ENCODE measurements at regions of chr9 and their contacts with region 1.

Region 1: DNA sequence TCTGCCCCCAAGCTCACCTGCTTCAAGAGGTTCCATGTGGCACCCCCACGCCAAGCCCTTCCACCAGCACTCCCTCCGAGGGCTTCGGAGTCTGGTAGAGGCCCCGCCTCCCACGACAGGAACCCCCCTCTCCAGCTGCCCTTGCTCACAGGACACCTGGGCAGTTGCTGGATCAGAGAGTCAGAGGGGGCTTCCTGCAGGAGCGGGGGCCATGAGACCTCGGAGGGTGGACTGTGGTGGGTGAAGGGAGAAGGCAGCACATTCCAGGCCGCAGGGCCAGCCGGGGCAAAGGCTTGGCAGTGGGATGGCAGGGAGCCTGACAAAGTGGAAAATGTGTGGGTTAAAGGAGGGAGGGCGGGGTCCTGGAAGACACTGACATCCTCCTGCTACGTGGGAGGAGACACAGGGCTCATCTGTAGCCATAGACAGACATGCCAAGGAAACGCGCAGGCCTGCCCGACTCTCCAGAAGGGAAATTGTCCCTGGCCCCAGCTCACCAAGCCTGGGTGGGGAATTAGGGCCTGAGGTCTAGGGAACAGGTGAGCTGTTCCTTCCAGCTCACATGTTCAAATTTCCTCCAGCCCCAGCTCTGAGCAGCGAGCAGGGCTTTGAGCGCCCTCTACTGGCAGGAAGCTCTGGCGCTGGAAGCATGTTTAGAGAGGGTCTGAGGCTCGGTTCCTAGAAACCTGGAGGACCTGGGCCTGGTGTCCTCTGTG is 74.2 kb downstream of the NTNG2 start:
- DNase-seq: peak; percentile 63 to 87 (median 77)
- ATAC-seq: peak; percentile 7 to 46 (median 24)
- H3K4me3 ChIP-seq: no peak overlapping the region
- H3K27ac ChIP-seq: no peak overlapping the region
- H3K4me1 ChIP-seq: peaks cover 0 to 30% (median 6%) of the 10 kb centered on the region in 12 donors
- H3K27me3 ChIP-seq: peaks cover 0 to 15% (median 0%) of the 10 kb centered on the region in 9 donors
- CTCF ChIP-seq: peak; percentile 88 to 98 (median 94)
- POLR2A ChIP-seq: no peak

Region 2: DNA sequence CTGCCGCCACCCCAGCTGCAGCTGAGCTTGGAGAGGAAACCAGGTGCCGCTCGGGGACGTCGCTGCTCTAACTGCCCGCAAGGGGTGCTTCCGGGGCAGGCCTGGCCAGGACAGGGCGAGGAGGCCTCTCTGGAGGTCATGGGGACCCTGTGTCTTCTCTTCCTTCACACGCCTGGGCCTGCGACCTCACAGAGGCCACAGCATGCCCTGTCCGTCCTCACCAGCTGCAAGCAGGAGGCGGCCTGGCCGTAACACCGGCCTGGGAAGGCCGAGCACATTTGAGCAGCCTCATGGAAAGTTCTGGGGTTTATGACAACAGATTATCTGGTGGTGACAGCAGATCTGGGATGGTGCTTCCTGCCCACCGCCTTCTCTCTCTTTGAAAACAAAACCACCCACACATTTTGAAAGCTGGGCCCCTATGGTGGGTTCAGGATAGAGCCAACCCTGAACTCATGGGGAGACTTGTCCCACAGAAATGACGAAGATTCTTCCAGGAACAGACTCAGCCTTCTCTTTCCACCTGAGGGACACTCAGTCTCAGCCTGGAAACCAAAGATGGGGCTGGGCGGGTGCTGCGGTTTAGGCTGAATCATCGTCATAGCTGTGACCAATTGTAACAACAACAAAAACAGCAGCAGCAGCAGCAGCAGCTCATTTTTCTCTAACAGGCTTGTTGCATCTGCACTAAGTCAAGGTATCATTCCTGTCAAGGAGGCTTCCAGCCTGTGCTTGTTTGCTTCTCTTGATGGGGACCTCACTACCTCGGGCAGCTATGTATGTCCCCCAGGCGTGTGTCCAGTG is 396.6 kb before region 1 on chr9:
- intact Hi-C with region 1: loop called in 3 of 10 experiments (anchors 2 to 10 kb)
- DNase-seq: peak in 3 of 5 donors; percentile 25 to 51 (median 43)
- ATAC-seq: peak; percentile 25 to 75 (median 66)
- H3K4me3 ChIP-seq: no peak overlapping the region
- H3K27ac ChIP-seq: peak overlapping the region in 4 of 12 donors; percentile 37 to 52 (median 40)
- H3K4me1 ChIP-seq: no peaks in the 10 kb centered on the region
- H3K27me3 ChIP-seq: peaks cover 0 to 19% (median 0%) of the 10 kb centered on the region in 9 donors
- CTCF ChIP-seq: no peak
- POLR2A ChIP-seq: no peak

Region 3: DNA sequence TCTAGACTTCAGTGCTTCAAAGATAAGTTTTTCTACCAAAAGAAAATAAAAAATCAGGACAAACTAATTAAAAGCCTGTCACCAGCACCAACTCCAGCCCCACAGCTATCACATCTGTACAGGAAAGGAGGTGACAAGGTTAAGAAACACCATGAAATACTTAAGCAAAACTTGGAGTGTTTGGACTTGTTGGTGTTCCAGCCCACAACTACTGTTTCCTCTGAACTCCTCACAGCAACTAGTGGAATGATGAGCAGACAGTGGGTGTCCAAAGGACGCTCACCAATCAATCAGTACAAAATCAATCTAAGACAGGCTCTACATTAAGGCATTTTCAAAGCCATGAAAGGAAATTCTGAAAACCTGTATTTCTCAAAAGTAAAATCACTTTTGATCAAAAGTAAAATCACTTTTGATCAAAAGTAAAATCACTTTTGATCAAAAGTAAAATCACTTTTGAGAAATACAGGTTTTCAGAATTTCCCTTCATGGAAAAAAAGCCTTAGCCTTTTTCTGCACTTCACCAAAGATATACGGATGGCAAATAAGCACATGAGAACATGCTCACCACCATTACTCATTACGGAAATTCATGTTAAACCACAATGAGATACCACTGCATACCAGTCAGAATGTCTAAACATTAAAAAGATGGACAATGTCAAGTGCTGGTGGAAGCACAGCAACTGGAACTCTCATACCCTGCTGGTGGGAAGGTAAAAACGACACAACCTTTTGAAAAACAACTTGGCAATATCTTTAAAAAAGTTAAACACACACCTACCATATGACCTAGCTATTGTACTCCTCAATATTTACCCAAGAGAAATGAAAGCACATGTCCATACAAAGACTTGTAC is 236.2 kb before region 1 on chr9:
- intact Hi-C with region 1: loop called in 1 of 10 experiments (anchors 5 kb)
- DNase-seq: no peak
- ATAC-seq: no peak
- H3K4me3 ChIP-seq: no peak overlapping the region
- H3K27ac ChIP-seq: no peak overlapping the region
- H3K4me1 ChIP-seq: peaks cover 0 to 27% (median 13%) of the 10 kb centered on the region in 12 donors
- H3K27me3 ChIP-seq: no peaks in the 10 kb centered on the region
- CTCF ChIP-seq: no peak
- POLR2A ChIP-seq: no peak

Region 4: GRCh38 chr9:132079391-132080091 is 156.6 kb before region 1 on chr9 and contains the start of gene MED27:
- intact Hi-C with region 1: loop called in 6 of 10 experiments (anchors 5 to 10 kb)
- DNase-seq: peak; percentile 91 to 95 (median 93)
- ATAC-seq: peak; percentile 92 to 99 (median 98)
- H3K4me3 ChIP-seq: peak within 1 kb of the TSS; percentile 40 to 96 (median 76)
- H3K27ac ChIP-seq: peak within 1 kb of the TSS; percentile 1 to 80 (median 68)
- H3K4me1 ChIP-seq: peaks cover 0 to 30% (median 17%) of the 10 kb centered on the region in 12 donors
- H3K27me3 ChIP-seq: no peaks in the 10 kb centered on the region
- CTCF ChIP-seq: no peak
- POLR2A ChIP-seq: no peak
- total RNA-seq, gene MED27: 14.3 to 20.5 (median 15.6) TPM

Region 5: DNA sequence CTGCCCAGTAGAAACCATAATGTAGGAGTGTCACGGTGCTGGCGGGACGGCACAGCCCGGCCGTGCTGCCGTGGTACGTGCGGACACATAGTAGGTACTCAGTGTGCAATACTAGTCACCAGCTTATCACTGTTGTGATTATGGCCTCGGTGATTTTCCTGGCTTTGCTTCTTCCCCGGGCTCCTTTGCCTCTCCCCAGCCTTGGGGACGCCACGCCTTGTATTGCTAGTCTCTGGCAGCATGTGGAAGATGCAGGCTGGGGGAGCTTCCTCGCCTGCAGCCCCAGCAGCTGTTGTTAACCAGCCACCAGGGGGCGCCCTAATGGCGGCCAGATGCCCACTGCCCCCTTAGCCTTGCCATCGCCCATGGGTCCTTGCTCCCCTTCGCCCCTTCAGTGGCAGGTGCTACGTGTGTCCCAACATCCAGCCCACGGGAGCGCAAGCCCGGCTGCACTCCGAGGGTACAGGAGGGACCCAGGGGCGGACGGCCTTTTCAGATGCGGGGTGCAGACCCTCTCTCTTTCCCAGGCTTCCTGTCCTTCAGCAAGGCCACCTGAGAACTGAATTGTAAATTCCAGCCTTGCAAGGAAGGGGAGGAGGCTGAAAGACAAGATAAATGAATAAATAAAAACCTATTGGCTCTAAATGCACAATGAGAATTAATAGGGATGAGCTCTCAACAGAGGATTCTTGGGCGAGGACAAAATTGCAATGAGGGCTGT is 66.3 kb before region 1 on chr9:
- intact Hi-C with region 1: loop called (anchors 1 to 5 kb)
- DNase-seq: peak; percentile 32 to 80 (median 64)
- ATAC-seq: peak; percentile 49 to 71 (median 64)
- H3K4me3 ChIP-seq: no peak overlapping the region
- H3K27ac ChIP-seq: no peak overlapping the region
- H3K4me1 ChIP-seq: peaks cover 0 to 6% (median 4%) of the 10 kb centered on the region in 12 donors
- H3K27me3 ChIP-seq: peaks cover 1 to 29% (median 10%) of the 10 kb centered on the region in 9 donors
- CTCF ChIP-seq: peak; percentile 67 to 89 (median 81)
- POLR2A ChIP-seq: no peak

Region 6: DNA sequence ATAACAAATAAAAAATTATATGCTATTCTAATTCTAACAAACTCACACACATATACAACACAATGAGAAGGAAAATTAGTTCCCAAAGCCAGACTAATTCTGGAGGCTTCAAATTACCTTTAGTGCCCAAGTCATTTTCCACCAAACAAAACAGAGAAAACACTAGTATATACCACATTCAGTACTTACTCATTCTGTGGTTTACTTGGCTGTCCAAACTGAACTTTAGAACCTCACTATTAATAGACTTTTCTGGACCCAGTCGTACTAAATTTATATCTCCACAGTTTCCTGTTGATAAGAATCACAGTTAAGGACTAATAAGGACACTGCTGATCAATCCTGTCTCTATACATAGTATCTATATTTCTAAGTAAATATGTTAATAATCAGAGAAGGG is 52.3 kb after region 1 on chr9:
- intact Hi-C with region 1: no loop called
- DNase-seq: no peak
- ATAC-seq: no peak
- H3K4me3 ChIP-seq: no peak overlapping the region
- H3K27ac ChIP-seq: peak overlapping the region in 4 of 12 donors; percentile 4 to 44 (median 7)
- H3K4me1 ChIP-seq: peaks cover 0 to 21% (median 15%) of the 10 kb centered on the region in 12 donors
- H3K27me3 ChIP-seq: no peaks in the 10 kb centered on the region
- CTCF ChIP-seq: no peak
- POLR2A ChIP-seq: no peak

Measured in heart left ventricle (tissue), 16 donors.